ENCODE measurements at regions of chr6 and their contacts with region 1.

Region 1: DNA sequence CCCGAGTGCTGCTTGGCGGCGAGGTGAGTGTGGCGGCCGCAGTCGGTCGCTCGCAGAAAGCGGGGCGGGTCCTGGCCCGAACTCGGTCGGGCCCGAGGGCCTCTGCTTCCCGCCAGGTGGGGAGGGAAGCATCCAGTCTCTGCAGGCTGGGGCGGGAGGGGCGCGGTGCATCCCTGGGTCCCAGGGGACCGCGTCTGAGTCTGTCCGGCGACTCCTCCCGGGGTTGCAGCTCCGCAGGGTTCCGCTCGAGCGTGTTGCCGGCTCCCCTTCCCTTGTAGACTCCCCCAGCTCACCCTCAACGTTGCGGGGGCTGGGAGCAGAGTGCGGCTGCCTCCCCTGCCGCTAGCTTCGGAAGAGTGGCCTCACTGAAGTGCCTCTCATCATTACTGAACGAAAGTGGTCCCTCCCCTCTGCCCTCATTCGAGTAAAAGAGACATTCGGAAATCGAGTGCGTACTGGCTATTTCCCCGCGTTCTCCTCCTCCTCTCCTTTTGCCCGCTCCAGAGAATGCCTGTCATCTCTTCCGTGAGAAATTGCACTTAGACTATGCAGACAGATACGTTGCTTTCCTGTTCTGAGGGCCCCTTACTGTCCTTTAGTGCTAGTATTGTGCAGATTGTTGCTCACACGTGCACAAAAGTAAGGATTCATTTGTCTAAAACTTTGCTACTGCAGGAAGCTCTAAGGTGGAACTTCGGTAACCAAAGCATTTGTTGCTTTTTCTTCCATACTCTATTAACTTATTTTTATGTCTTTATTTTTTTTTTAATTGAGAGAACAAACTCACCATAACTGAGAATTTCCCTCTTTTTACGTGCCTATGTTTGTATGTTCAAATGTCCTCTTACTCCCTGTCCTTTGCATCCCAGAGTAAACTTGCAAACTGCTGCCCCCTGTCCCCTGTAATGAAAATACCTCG is 751 bp downstream of the MAP3K4 start:
- DNase-seq: peak; percentile 84 to 91 (median 86)
- ATAC-seq: peak; percentile 77
- H3K4me3 ChIP-seq: peak overlapping the region; percentile 86
- H3K27ac ChIP-seq: peak overlapping the region; percentile 81
- H3K4me1 ChIP-seq: peaks cover 12% of the 10 kb centered on the region in 2 experiments; a peak in 4 of 5 replicates
- H3K27me3 ChIP-seq: no peaks in the 10 kb centered on the region
- CTCF ChIP-seq: peak; percentile 87 to 96 (median 92)
- EP300 ChIP-seq: peak; percentile 28; the same call in 1 of the 2 replicates
- POLR2A ChIP-seq: peak; percentile 58; the same call in 1 of the 2 replicates
- RAD21 ChIP-seq: peak; percentile 91 to 92

Region 2: DNA sequence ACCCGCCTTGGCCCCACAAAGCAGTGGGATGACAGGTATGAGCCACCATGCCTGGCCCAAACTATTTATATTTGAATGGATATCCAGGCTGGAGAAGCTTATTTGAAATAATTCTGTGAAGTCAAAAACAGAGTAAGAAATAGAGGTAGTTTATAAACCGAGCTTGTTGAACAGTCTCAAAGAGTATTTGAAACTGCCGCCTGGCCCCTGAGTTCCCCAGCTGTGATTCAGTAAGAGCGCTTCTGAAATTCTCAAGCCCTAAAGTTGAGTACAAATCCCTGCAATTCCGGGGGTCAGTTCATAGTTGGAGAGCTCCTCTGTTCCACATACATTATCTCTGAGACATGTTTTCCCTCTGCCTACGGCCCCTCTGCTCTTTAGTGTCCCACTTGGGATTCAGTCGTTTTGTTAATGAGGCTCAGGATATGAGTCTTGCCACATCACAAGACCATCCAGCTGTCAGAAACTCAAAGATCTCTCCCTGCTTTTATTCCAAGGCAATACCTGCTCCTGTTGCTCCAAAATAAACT is 1427.1 kb before region 1 on chr6:
- CTCF ChIA-PET with region 1: no interaction called
- POLR2A ChIA-PET with region 1: no interaction called
- in situ Hi-C with region 1: no loop called
- intact Hi-C with region 1: no loop called
- DNase-seq: no peak
- ATAC-seq: no peak
- H3K4me3 ChIP-seq: no peak overlapping the region
- H3K27ac ChIP-seq: no peak overlapping the region
- H3K4me1 ChIP-seq: no peaks in the 10 kb centered on the region
- H3K27me3 ChIP-seq: peaks cover 0 to 6% of the 10 kb centered on the region in 2 experiments; a peak in 2 of 5 replicates
- CTCF ChIP-seq: no peak
- EP300 ChIP-seq: no peak
- POLR2A ChIP-seq: no peak
- RAD21 ChIP-seq: no peak

Region 3: GRCh38 chr6:160520043-160520904 is 472.0 kb before region 1 on chr6:
- CTCF ChIA-PET with region 1: no interaction called
- POLR2A ChIA-PET with region 1: no interaction called
- in situ Hi-C with region 1: no loop called
- intact Hi-C with region 1: loop called (anchors 5 kb)
- DNase-seq: peak; percentile 84 to 86 (median 85)
- ATAC-seq: peak; percentile 94
- H3K4me3 ChIP-seq: peak overlapping the region; percentile 54
- H3K27ac ChIP-seq: peak overlapping the region; percentile 43; the same call in 2 of the 3 replicates
- H3K4me1 ChIP-seq: peaks cover 3 to 9% of the 10 kb centered on the region in 2 experiments; a peak in 3 of 5 replicates
- H3K27me3 ChIP-seq: no peaks in the 10 kb centered on the region
- CTCF ChIP-seq: peak; percentile 4 to 58 (median 32); a peak in 5 of 6 replicates
- EP300 ChIP-seq: no peak; the same call in 1 of the 2 replicates
- POLR2A ChIP-seq: peak; percentile 65; the same call in 1 of the 2 replicates
- RAD21 ChIP-seq: peak; percentile 85 to 90

Region 4: DNA sequence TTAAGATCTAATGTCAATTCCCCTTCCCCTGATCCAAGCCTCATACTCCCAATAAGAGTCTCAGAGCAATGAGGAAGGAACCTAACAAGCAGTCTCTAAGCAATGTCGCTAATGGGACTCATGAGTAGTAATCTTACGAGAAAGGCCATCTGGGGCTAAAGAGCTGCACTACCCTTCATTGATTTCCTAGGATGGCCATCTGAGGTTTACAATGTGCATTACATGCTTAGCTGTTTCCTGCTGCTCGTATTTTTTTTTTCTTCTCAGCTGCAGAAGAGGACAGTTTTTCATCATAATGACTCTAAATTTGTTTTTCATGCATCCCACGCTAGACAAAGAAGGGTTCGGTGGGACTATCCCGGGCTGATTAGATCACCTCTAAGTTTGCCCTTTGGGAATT is 447.5 kb before region 1 on chr6:
- CTCF ChIA-PET with region 1: no interaction called
- POLR2A ChIA-PET with region 1: no interaction called
- in situ Hi-C with region 1: no loop called
- intact Hi-C with region 1: no loop called
- DNase-seq: no peak
- ATAC-seq: no peak
- H3K4me3 ChIP-seq: no peak overlapping the region
- H3K27ac ChIP-seq: no peak overlapping the region
- H3K4me1 ChIP-seq: no peaks in the 10 kb centered on the region
- H3K27me3 ChIP-seq: peaks cover 5% of the 10 kb centered on the region in 2 experiments; a peak in 3 of 5 replicates
- CTCF ChIP-seq: no peak
- EP300 ChIP-seq: no peak
- POLR2A ChIP-seq: no peak
- RAD21 ChIP-seq: no peak

Region 5: GRCh38 chr6:160791459-160791858 is 200.9 kb before region 1 on chr6:
- CTCF ChIA-PET with region 1: no interaction called
- POLR2A ChIA-PET with region 1: interaction called, 3 read pairs
- in situ Hi-C with region 1: no loop called
- intact Hi-C with region 1: loop called (anchors 1 kb)
- DNase-seq: peak in 1 of 4 experiments; percentile 72
- ATAC-seq: peak; percentile 80
- H3K4me3 ChIP-seq: no peak overlapping the region
- H3K27ac ChIP-seq: peak overlapping the region; percentile 92
- H3K4me1 ChIP-seq: peaks cover 10 to 19% of the 10 kb centered on the region in 2 experiments; a peak in 4 of 5 replicates
- H3K27me3 ChIP-seq: no peaks in the 10 kb centered on the region
- CTCF ChIP-seq: no peak
- EP300 ChIP-seq: no peak
- POLR2A ChIP-seq: no peak
- RAD21 ChIP-seq: no peak

Region 6: GRCh38 chr6:161101517-161101916 is 109.2 kb after region 1 on chr6:
- CTCF ChIA-PET with region 1: no interaction called
- POLR2A ChIA-PET with region 1: no interaction called
- in situ Hi-C with region 1: no loop called
- intact Hi-C with region 1: loop called (anchors 5 kb)
- DNase-seq: peak in 1 of 4 experiments; percentile 32
- ATAC-seq: peak; percentile 80
- H3K4me3 ChIP-seq: no peak overlapping the region
- H3K27ac ChIP-seq: no peak overlapping the region
- H3K4me1 ChIP-seq: 0 out of 5 replicates have a peak, but pooled peaks cover 0 to 3% of the 10 kb centered on the region in 2 experiments
- H3K27me3 ChIP-seq: no peaks in the 10 kb centered on the region
- CTCF ChIP-seq: peak; percentile 52 to 64 (median 62)
- EP300 ChIP-seq: no peak
- POLR2A ChIP-seq: no peak
- RAD21 ChIP-seq: peak; percentile 45 to 65

Region 7: DNA sequence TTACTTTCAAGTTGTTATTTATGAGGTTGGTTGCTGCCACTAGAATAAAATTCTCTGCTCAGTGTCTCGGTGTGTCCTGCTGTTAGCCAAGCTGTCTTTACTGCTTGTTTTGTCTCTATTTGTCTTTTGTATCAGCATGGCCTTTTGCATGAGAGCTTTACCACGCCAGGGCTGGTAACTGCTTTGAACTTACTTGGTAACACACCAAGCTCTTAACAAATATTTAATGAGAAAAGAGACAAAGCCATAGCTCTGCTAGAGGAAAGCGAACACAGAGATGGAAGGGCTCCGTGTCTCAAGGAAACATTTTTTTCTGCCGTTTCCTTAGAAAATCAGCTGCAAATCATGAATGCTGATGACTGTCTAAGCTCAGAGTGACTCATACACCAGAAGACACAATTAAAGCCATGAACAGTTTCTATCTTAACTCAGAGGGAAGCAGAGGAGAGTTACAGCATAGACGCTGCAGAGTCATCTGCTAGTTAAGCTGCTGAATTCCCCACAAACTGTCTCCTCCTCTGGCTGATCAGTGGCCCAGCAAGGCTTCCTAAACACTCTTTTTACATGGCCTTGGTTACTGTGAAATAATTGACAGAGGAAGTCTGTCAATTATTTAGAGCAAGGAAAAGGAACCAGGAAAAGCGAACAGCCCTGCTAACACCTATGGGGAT is 236.7 kb after region 1 on chr6:
- CTCF ChIA-PET with region 1: no interaction called
- POLR2A ChIA-PET with region 1: no interaction called
- in situ Hi-C with region 1: no loop called
- intact Hi-C with region 1: loop called (anchors 5 kb)
- DNase-seq: peak in 2 of 4 experiments; percentile 76 to 87
- ATAC-seq: peak; percentile 68
- H3K4me3 ChIP-seq: no peak overlapping the region
- H3K27ac ChIP-seq: peak overlapping the region; percentile 61
- H3K4me1 ChIP-seq: peaks cover 23 to 51% of the 10 kb centered on the region in 2 experiments
- H3K27me3 ChIP-seq: no peaks in the 10 kb centered on the region
- CTCF ChIP-seq: no peak
- EP300 ChIP-seq: peak; percentile 54; the same call in 1 of the 2 replicates
- POLR2A ChIP-seq: peak; percentile 41; the same call in 1 of the 2 replicates
- RAD21 ChIP-seq: peak in 1 of 2 experiments; percentile 47; a peak in 2 of 4 replicates

Region 8: DNA sequence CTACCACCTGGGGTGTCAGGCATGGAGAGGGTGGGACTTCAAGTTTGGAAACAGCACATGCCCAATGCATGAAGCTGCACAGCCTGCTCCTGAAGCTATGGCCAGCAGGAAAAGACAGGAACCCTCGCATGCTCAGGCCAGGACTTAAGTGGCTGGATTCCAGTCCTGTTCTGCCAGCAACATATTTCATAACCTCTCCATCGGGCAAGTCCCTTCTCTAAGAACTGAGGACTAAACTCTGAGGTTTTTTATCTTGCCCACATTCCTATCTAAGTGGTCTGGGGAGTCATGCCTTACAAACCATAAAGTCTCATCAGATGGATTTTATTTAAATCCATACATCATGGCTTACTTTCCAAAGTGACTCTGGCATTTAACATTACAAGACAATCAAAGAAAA is 309.0 kb after region 1 on chr6:
- CTCF ChIA-PET with region 1: no interaction called
- POLR2A ChIA-PET with region 1: no interaction called
- in situ Hi-C with region 1: no loop called
- intact Hi-C with region 1: no loop called
- DNase-seq: no peak
- ATAC-seq: peak; percentile 21; the same call in 2 of the 3 replicates
- H3K4me3 ChIP-seq: no peak overlapping the region
- H3K27ac ChIP-seq: no peak overlapping the region
- H3K4me1 ChIP-seq: peaks cover 2 to 10% of the 10 kb centered on the region in 2 experiments; a peak in 3 of 5 replicates
- H3K27me3 ChIP-seq: no peaks in the 10 kb centered on the region
- CTCF ChIP-seq: no peak
- EP300 ChIP-seq: no peak
- POLR2A ChIP-seq: no peak
- RAD21 ChIP-seq: no peak

Region 9: GRCh38 chr6:161370880-161371279 is 378.6 kb after region 1 on chr6:
- CTCF ChIA-PET with region 1: no interaction called
- POLR2A ChIA-PET with region 1: interaction called, 8 read pairs
- in situ Hi-C with region 1: no loop called
- intact Hi-C with region 1: loop called (anchors 2 kb)
- DNase-seq: peak; percentile 77 to 89 (median 84)
- ATAC-seq: peak; percentile 76
- H3K4me3 ChIP-seq: no peak overlapping the region
- H3K27ac ChIP-seq: no peak overlapping the region
- H3K4me1 ChIP-seq: peaks cover 11% of the 10 kb centered on the region in 2 experiments; a peak in 4 of 5 replicates
- H3K27me3 ChIP-seq: no peaks in the 10 kb centered on the region; a peak in 1 of 5 replicates
- CTCF ChIP-seq: peak; percentile 93 to 98 (median 98)
- EP300 ChIP-seq: no peak
- POLR2A ChIP-seq: no peak
- RAD21 ChIP-seq: peak; percentile 98 to 99